ENCODE measurements at regions of chr7 and their contacts with region 1.

Region 1: DNA sequence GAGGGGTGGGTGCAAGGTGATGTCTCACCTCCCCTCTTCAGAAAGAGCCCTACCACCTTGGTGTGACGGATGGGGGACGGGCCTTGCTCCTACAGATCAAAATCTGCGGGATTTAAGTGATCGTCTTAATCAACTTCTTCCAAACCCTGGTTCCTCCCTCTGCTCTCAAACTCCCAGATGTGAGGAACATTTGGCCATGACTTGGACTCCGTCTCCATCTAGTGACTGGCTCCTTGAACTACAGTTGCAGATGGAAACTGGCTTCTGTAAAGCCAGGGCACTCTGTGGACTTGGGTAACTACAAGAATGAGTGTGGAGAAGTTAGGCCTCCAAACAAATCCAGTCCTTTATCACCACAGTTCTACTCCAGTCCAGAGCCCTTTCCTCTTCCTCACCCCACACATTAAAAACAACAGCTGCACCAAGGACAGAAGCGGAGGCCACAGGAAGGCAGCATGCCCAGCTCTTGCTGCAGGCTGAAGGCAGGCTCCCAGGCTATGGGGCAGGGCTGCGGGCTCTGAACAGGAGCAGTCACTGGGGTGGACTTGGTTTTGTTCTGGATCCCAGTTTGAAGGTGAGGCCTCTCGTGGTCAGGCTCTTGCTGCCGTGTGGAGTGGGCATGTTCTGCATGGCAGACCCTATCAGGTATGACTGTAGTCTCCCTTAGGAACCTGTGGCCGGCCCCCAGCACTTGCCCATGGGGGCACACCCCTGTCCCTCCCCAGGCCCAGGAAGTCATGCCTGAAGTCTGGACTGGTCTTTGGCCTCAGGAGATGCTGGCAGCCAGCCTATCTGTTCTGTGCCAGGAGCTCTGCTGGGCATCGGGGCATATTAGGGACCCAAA is 79.4 kb downstream of the VWC2 start:
- DNase-seq: peak in 5 of 10 donors; percentile 26 to 83 (median 59)

Region 2: GRCh38 chr7:48299580-48300169 is 1553.2 kb before region 1 on chr7:
- intact Hi-C with region 1: loop called (anchors 1 kb)
- DNase-seq: peak in 8 of 10 donors; percentile 47 to 93 (median 74)

Measured in posterior cingulate gyrus (tissue), 11 donors.